CD4-positive, alpha-beta memory T cell (primary cell): ENCODE measurements at regions of chr7 and their contacts with region 1.

Region 1: GRCh38 chr7:24979863-24980533 is at the start of gene OSBPL3:
- DNase-seq: peak; percentile 94 to 97 (median 95)
- H3K4me3 ChIP-seq: peak within 1 kb of the TSS; percentile 59 to 72
- H3K4me3 Mint-ChIP-seq: peak within 1 kb of the TSS; percentile 91 to 98 (median 97)
- H3K27ac ChIP-seq: peak within 1 kb of the TSS; percentile 66
- H3K27ac Mint-ChIP-seq: peak within 1 kb of the TSS; percentile 94 to 99 (median 96)
- H3K4me1 ChIP-seq: peaks cover 57% of the 10 kb centered on the region
- H3K4me1 Mint-ChIP-seq: peaks cover 44 to 67% (median 54%) of the 10 kb centered on the region in 4 donors
- H3K27me3 ChIP-seq: no peaks in the 10 kb centered on the region
- H3K27me3 Mint-ChIP-seq: no peaks in the 10 kb centered on the region
- total RNA-seq, gene OSBPL3: 61.2 to 72.7 TPM

Region 2: DNA sequence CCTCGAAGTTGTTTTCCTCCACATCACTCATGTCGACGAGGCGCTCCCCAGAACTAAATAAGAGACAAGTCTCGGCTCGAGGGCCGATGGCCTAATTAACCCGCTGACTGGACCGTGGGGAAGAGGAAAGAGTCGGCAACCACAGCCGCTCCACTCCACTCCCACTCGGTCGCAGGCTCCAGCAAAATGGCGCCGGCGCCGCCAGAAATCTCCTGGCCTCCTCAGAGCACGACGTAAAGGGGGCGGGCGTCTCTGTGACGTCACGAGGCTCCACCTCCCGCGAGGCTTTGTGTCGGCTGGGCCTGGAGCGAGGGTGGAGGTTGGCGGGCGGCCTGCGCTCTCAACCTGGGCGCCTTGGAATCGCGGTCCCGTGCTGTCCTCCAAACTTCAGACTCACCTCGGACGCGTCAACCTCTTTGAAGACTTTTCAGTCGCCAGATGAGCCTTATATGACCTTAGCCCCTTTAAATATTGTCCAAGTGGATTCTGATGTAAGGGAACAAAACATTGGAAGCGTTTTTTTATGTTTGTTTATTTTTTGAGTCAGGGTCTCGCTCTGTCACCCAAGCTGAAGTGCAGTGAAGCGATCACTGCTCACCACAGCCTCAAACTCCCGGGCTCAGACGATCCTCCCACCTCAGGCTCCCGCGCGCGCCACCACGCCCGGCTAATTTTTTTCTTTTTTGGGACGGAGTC is 1448.1 kb before region 1 on chr7 and contains the start of gene TRA2A:
- CTCF ChIA-PET with region 1: no interaction called
- POLR2A ChIA-PET with region 1: interaction called, 3 read pairs
- intact Hi-C with region 1: loop called (anchors 5 kb)
- DNase-seq: peak; percentile 92 to 96 (median 95)
- H3K4me3 ChIP-seq: peak within 1 kb of the TSS; percentile 67 to 90
- H3K4me3 Mint-ChIP-seq: peak within 1 kb of the TSS; percentile 98 to 100 (median 99)
- H3K27ac ChIP-seq: peak within 1 kb of the TSS; percentile 96
- H3K27ac Mint-ChIP-seq: peak within 1 kb of the TSS; percentile 100
- H3K4me1 ChIP-seq: peaks cover 40% of the 10 kb centered on the region
- H3K4me1 Mint-ChIP-seq: peaks cover 28 to 52% (median 40%) of the 10 kb centered on the region in 4 donors
- H3K27me3 ChIP-seq: no peaks in the 10 kb centered on the region
- H3K27me3 Mint-ChIP-seq: no peaks in the 10 kb centered on the region
- total RNA-seq, gene TRA2A: 143 to 145 TPM

Region 3: GRCh38 chr7:24819916-24820689 is 159.9 kb before region 1 on chr7:
- CTCF ChIA-PET with region 1: interaction called, 135 read pairs
- POLR2A ChIA-PET with region 1: interaction called, 164 read pairs
- intact Hi-C with region 1: loop called (anchors 1 kb)
- DNase-seq: peak; percentile 70 to 81 (median 74)
- H3K4me3 ChIP-seq: peak overlapping the region in 1 of 2 donors; percentile 23
- H3K4me3 Mint-ChIP-seq: peak overlapping the region; percentile 78 to 90 (median 84)
- H3K27ac ChIP-seq: peak overlapping the region; percentile 78
- H3K27ac Mint-ChIP-seq: peak overlapping the region; percentile 88 to 100 (median 98)
- H3K4me1 ChIP-seq: peaks cover 42% of the 10 kb centered on the region
- H3K4me1 Mint-ChIP-seq: peaks cover 29 to 55% (median 42%) of the 10 kb centered on the region in 4 donors
- H3K27me3 ChIP-seq: no peaks in the 10 kb centered on the region
- H3K27me3 Mint-ChIP-seq: no peaks in the 10 kb centered on the region

Region 4: DNA sequence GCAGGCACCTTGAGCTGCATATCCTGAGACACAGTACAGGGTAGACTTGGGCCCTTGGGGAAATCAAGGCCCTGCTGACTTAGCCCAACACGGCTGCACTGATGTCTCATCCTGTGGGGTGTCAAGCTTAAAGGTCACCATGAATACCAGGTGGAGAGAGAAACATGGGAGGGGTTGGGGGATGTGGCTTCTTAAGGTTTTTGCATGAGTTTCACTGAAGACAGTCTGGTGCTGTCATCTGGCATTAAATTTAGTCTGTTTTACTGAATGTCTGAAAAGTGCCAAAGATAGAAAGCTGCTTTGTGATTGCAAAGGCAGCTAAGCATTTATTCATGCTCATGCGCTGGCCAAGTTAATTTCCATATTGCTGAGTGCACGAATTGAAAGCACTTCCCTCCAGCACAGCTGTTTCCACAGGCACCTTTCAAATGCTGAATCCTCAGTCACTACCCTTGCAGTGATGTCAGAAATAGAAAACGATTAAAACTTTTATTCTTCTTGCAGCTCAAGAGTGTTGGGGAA is 102.1 kb before region 1 on chr7:
- CTCF ChIA-PET with region 1: interaction called, 5 read pairs
- POLR2A ChIA-PET with region 1: interaction called, 14 read pairs
- intact Hi-C with region 1: no loop called
- DNase-seq: peak in 1 of 5 donors; percentile 53
- H3K4me3 ChIP-seq: no peak overlapping the region
- H3K4me3 Mint-ChIP-seq: peak overlapping the region in 1 of 8 donors; percentile 73
- H3K27ac ChIP-seq: no peak overlapping the region
- H3K27ac Mint-ChIP-seq: peak overlapping the region in 3 of 7 donors; percentile 7 to 75 (median 43)
- H3K4me1 ChIP-seq: peaks cover 28% of the 10 kb centered on the region
- H3K4me1 Mint-ChIP-seq: peaks cover 8 to 40% (median 22%) of the 10 kb centered on the region in 4 donors
- H3K27me3 ChIP-seq: no peaks in the 10 kb centered on the region
- H3K27me3 Mint-ChIP-seq: no peaks in the 10 kb centered on the region

Region 5: GRCh38 chr7:24959735-24960485 is 20.1 kb before region 1 on chr7:
- CTCF ChIA-PET with region 1: interaction called, 17 read pairs
- POLR2A ChIA-PET with region 1: interaction called, 141 read pairs
- intact Hi-C with region 1: loop called (anchors 2 kb)
- DNase-seq: no peak
- H3K4me3 ChIP-seq: no peak overlapping the region
- H3K4me3 Mint-ChIP-seq: peak overlapping the region in 2 of 8 donors; percentile 22 to 26
- H3K27ac ChIP-seq: no peak overlapping the region
- H3K27ac Mint-ChIP-seq: peak overlapping the region in 2 of 7 donors; percentile 10 to 53
- H3K4me1 ChIP-seq: peaks cover 59% of the 10 kb centered on the region
- H3K4me1 Mint-ChIP-seq: peaks cover 47 to 96% (median 81%) of the 10 kb centered on the region in 4 donors
- H3K27me3 ChIP-seq: no peaks in the 10 kb centered on the region
- H3K27me3 Mint-ChIP-seq: no peaks in the 10 kb centered on the region

Region 6: GRCh38 chr7:25028370-25029021 is 48.5 kb after region 1 on chr7:
- CTCF ChIA-PET with region 1: interaction called, 118 read pairs
- POLR2A ChIA-PET with region 1: interaction called, 210 read pairs
- intact Hi-C with region 1: loop called (anchors 1 kb)
- DNase-seq: peak; percentile 54 to 78 (median 71)
- H3K4me3 ChIP-seq: no peak overlapping the region
- H3K4me3 Mint-ChIP-seq: peak overlapping the region in 7 of 8 donors; percentile 61 to 92 (median 78)
- H3K27ac ChIP-seq: peak overlapping the region; percentile 53
- H3K27ac Mint-ChIP-seq: peak overlapping the region; percentile 67 to 97 (median 94)
- H3K4me1 ChIP-seq: peaks cover 55% of the 10 kb centered on the region
- H3K4me1 Mint-ChIP-seq: peaks cover 25 to 78% (median 62%) of the 10 kb centered on the region in 4 donors
- H3K27me3 ChIP-seq: no peaks in the 10 kb centered on the region
- H3K27me3 Mint-ChIP-seq: peaks cover 0 to 1% of the 10 kb centered on the region in 2 donors

Region 7: GRCh38 chr7:25125137-25125946 is 145.3 kb after region 1 on chr7 and contains the start of gene CYCS:
- CTCF ChIA-PET with region 1: interaction called, 5 read pairs
- POLR2A ChIA-PET with region 1: interaction called, 20 read pairs
- intact Hi-C with region 1: loop called (anchors 1 kb)
- DNase-seq: peak; percentile 99 to 100 (median 99)
- H3K4me3 ChIP-seq: peak within 1 kb of the TSS; percentile 72 to 82
- H3K4me3 Mint-ChIP-seq: peak within 1 kb of the TSS; percentile 97 to 100 (median 100)
- H3K27ac ChIP-seq: peak within 1 kb of the TSS; percentile 97
- H3K27ac Mint-ChIP-seq: peak within 1 kb of the TSS; percentile 96 to 100 (median 100)
- H3K4me1 ChIP-seq: peaks cover 9% of the 10 kb centered on the region
- H3K4me1 Mint-ChIP-seq: peaks cover 14 to 26% (median 15%) of the 10 kb centered on the region in 4 donors
- H3K27me3 ChIP-seq: no peaks in the 10 kb centered on the region
- H3K27me3 Mint-ChIP-seq: no peaks in the 10 kb centered on the region
- total RNA-seq, gene CYCS: 46.9 to 54.2 TPM

Region 8: GRCh38 chr7:25777969-25778708 is 798.1 kb after region 1 on chr7:
- CTCF ChIA-PET with region 1: no interaction called
- POLR2A ChIA-PET with region 1: no interaction called
- intact Hi-C with region 1: no loop called
- DNase-seq: no peak
- H3K4me3 ChIP-seq: no peak overlapping the region
- H3K4me3 Mint-ChIP-seq: no peak overlapping the region
- H3K27ac ChIP-seq: no peak overlapping the region
- H3K27ac Mint-ChIP-seq: no peak overlapping the region
- H3K4me1 ChIP-seq: no peaks in the 10 kb centered on the region
- H3K4me1 Mint-ChIP-seq: no peaks in the 10 kb centered on the region
- H3K27me3 ChIP-seq: no peaks in the 10 kb centered on the region
- H3K27me3 Mint-ChIP-seq: peaks cover 2 to 5% of the 10 kb centered on the region in 2 donors